Activated B cell treated with CpG ODN at 0.5 μM for 24 hours (primary cell): ENCODE measurements at regions of chr11 and their contacts with region 1.

Region 1: DNA sequence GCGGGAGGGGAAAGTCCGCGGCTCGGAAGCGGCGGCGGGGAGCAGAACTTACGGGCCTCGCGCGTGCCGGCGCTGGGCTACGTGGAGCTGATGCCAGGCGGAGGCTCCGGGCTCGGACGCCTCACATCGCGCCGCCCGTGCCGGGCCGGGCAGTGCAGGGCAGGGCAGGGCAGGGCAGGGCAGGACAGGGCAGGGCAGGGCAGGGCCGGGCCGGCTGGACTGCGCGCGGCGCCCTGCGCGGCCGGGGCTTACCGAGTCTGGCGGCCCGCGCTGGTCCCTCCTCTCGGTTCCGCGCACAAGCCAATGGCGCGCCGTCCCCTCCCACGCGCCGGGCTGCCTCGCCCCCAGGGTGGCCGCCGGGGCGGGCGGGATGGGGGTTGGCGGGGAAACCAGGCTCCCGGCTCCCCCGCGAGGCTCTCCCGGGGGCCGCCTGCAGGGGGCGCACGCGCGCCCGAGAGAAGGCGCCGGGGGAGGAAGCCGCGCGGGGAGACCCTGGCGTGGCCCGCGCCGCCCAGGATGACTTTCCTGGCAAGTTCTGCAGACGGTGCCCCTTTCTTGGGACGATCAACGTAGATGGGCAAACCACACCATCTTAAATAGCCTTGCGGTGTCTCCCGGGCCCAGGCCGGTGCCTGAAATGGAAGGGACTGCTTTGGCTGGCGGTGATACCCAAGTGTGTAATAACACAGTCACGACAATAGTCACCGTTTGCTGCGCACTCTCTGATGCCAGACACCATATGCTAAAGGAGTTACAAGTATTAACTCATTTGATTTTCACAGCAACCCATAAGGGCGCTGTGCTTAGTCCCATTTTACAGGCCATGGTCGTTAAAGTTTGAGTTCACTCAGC is at the start of gene TP53I11:
- DNase-seq: peak; percentile 74
- ATAC-seq: peak; percentile 76
- H3K4me3 Mint-ChIP-seq: peak within 1 kb of the TSS; percentile 91
- H3K27ac Mint-ChIP-seq: peak within 1 kb of the TSS; percentile 87
- H3K4me1 Mint-ChIP-seq: peaks cover 60% of the 10 kb centered on the region
- H3K27me3 Mint-ChIP-seq: no peaks in the 10 kb centered on the region
- CTCF ChIP-seq: peak; percentile 44
- total RNA-seq, gene TP53I11: 145 and 175 TPM in 2 replicates

Region 2: DNA sequence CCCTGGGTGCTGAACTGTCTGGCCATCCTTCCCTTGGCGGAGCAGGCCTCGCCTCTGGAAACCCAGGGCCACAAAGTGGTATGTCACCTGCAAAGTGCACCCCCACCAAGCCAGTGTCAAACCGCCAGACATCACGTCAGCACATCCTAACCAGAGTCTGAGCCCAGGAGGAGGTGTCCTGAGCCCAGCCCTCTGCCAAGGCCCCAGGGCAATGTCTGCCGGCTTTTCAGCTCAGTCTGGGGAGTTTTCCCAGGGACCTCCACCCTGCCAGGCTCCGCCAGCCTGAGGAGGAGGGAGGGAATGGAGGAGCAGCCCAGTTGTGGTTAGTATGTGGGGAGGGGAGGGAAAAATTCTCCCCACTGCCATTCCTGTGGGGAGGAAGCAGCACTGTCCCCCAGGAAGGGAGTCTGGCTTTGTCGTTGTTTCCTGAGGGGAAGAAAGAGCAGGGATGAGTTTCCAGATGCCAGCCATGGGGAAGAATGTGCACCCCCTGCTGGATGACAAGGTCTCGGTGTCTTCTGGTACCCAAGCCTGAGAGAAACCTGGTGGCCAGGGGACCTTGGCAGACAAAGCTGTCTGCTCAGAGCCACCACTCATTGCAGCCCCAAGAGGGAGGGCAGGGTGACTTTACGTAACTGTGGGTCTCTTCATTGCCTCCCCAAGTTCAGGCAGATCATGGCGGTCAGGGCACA is 466.8 kb before region 1 on chr11:
- CTCF ChIA-PET with region 1: no interaction called
- POLR2A ChIA-PET with region 1: no interaction called
- intact Hi-C with region 1: no loop called
- DNase-seq: no peak
- ATAC-seq: no peak
- H3K4me3 Mint-ChIP-seq: no peak overlapping the region
- H3K27ac Mint-ChIP-seq: no peak overlapping the region
- H3K4me1 Mint-ChIP-seq: no peaks in the 10 kb centered on the region
- H3K27me3 Mint-ChIP-seq: peaks cover 15% of the 10 kb centered on the region
- CTCF ChIP-seq: no peak

Region 3: DNA sequence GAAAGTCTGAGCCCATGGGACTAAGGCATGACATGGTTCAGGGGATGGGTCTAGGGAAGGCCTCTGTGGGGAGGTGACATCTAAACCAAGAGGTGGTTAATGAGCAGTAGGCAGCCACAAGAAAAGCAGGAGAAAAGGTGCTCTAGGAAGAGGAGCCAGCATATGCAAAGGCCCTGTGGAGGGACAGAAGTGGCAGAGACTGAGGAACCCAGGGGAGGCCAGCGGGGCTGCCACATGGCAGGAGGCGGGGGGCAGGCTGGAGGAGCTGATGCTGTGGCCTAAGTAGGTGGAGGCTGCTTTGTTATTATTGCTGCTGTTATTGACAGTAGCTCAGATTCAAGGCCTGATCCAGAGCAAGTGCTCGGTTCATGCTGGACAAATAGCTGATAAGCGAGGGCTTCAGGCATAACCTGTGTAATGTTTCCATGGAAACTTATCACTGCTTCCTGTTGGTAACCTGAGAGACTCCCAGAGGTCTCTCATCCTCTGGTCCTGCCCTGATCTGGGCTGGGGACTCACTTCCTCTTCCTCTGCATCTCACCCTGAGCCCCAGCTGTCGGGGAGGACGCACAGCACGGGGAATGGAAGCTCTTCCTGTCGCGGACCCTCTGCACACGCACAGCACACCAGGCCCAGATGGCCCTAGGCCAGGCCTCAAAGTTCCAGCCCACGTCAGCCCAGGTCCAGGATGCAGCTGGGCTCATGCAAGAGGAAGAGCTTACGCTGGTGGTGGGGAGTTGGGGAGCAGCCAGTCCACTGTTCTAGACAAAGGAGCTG is 75.1 kb after region 1 on chr11:
- CTCF ChIA-PET with region 1: interaction called, 5 read pairs
- POLR2A ChIA-PET with region 1: interaction called, 20 read pairs
- intact Hi-C with region 1: loop called (anchors 1 kb)
- DNase-seq: peak; percentile 48
- ATAC-seq: peak; percentile 46
- H3K4me3 Mint-ChIP-seq: peak overlapping the region; percentile 54
- H3K27ac Mint-ChIP-seq: peak overlapping the region; percentile 93
- H3K4me1 Mint-ChIP-seq: peaks cover 65% of the 10 kb centered on the region
- H3K27me3 Mint-ChIP-seq: no peaks in the 10 kb centered on the region
- CTCF ChIP-seq: no peak

Region 4: DNA sequence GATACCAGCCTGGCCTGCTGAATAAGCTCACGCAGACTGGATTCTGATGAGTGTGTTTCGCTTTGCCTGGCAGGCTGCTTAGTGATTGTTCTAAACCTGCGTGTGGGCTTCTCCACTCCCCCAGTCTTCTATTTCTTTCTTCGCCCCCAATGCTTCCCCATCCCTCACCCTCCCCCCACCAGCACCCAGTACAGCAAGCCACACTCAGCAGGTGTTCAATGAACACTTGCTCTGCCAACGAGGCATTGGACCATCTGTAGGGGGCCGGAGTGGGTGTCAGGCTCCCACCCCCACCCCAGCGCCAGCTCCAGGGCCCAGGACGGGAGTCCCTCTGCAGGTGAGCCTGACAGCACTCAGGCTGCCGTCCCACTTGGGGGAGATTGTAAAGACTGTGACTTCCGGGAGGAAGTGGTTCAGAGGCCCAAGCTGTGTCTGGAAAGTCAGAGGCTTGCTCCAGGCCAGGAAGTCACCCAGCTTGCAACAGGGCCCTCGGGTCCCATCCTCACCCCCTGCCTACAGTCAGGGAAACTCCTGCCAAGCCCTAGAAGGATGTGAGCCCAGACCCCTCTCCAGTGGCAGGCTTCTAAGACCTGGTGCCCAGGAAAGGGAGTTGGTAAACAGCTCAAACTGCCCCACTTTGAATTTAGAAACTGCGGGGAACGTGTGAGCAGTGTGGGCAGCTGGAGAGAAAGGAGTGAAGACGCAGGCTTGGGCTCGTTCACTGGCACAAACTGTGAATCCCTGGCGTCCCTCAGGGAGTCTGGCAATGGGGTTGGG is 129.3 kb after region 1 on chr11:
- CTCF ChIA-PET with region 1: interaction called, 3 read pairs
- POLR2A ChIA-PET with region 1: interaction called, 10 read pairs
- intact Hi-C with region 1: loop called (anchors 1 kb)
- DNase-seq: peak; percentile 45
- ATAC-seq: peak; percentile 71
- H3K4me3 Mint-ChIP-seq: peak overlapping the region; percentile 59
- H3K27ac Mint-ChIP-seq: peak overlapping the region; percentile 84
- H3K4me1 Mint-ChIP-seq: peaks cover 71% of the 10 kb centered on the region
- H3K27me3 Mint-ChIP-seq: no peaks in the 10 kb centered on the region
- CTCF ChIP-seq: no peak